H1 (cell line): ENCODE measurements at regions of chr7 and their contacts with region 1.

Region 1: DNA sequence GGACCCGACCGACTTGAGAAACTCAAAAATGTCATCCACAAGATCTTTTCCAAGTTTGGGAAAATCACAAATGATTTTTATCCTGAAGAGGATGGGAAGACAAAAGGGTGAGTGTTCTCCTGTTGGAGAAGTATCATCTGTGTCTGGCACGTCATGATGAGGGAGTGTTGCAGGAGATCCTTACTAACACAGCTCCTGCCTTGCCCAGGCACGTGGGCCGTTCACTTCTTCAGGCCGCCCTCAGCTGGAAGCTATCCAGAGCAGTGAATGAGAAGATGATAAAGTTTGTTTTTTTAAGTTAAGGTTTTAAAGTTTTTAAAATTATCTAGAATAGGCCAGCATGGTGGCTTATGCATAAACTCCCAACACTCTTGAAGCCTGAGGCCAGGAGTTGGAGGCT is 6.2 kb downstream of the EIF3B start:
- DNase-seq: no peak
- H3K4me3 ChIP-seq: no peak overlapping the region
- H3K27ac ChIP-seq: no peak overlapping the region
- H3K4me1 ChIP-seq: no peaks in the 10 kb centered on the region; a peak in 2 of 7 replicates
- H3K27me3 ChIP-seq: no peaks in the 10 kb centered on the region
- CTCF ChIP-seq: no peak
- EP300 ChIP-seq: no peak
- POLR2A ChIP-seq: no peak
- RAD21 ChIP-seq: no peak

Region 2: GRCh38 chr7:2373124-2373556 is 12.3 kb after region 1 on chr7:
- CTCF ChIA-PET with region 1: interaction called, 34 read pairs
- POLR2A ChIA-PET with region 1: interaction called, 69 read pairs
- DNase-seq: no peak
- H3K4me3 ChIP-seq: no peak overlapping the region
- H3K27ac ChIP-seq: no peak overlapping the region
- H3K4me1 ChIP-seq: no peaks in the 10 kb centered on the region
- H3K27me3 ChIP-seq: no peaks in the 10 kb centered on the region; a peak in 1 of 7 replicates
- CTCF ChIP-seq: peak in 1 of 3 experiments; percentile 6; a peak in 1 of 4 replicates
- EP300 ChIP-seq: no peak
- POLR2A ChIP-seq: peak in 1 of 2 experiments; percentile 8; a peak in 1 of 3 replicates
- RAD21 ChIP-seq: no peak

Region 3: DNA sequence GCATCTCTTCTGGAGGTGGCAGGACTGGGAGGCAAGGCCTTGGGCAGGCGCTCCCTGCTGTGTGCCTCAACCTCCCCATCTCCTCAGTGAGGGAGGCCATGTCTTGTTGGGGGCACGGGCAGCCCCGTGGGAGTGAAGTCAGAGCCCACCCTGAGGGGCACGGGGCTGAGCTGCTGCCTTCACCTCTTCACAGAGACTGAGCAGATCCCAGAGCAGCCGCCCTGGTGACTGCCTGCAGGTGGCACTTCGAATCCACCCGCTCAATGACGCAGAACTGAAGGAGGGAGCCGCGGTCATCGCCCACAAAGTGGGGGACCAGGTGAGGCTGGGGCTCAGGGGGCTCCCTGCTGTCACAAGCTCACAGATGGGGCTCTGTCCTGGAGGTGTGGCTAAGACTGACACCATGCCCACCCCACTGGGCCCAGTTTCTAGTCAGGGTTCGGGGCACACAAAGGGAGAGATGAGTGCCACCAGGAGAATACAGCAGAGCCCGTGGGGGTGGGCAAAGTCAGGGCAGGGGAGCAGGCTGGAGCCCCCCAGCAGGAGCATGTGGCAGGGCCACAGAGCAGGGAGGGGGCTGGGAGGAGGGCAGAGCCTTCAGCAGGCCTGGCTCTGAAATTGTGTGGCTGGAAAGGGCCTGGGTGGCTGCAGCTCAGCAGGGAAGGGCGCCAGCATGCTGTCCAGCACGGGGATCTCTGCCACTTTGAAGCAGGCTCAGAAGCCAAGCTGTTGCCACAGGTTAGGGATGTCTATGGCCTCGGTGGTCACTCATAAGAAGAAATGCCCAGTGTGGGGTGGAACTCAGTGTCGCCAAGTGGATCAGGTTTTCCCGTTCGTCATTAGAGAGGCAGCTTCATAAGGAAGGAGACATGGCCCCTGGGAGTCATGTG is 23.8 kb after region 1 on chr7:
- CTCF ChIA-PET with region 1: interaction called, 6 read pairs
- POLR2A ChIA-PET with region 1: interaction called, 14 read pairs
- DNase-seq: no peak
- H3K4me3 ChIP-seq: no peak overlapping the region
- H3K27ac ChIP-seq: no peak overlapping the region
- H3K4me1 ChIP-seq: peaks cover 0 to 5% (median 0%) of the 10 kb centered on the region in 4 experiments; a peak in 1 of 7 replicates
- H3K27me3 ChIP-seq: no peaks in the 10 kb centered on the region
- CTCF ChIP-seq: peak in 2 of 3 experiments; percentile 33; a peak in 2 of 4 replicates
- EP300 ChIP-seq: no peak
- POLR2A ChIP-seq: no peak
- RAD21 ChIP-seq: peak; percentile 46 to 64

Region 4: GRCh38 chr7:2597273-2597640 is 236.5 kb after region 1 on chr7:
- CTCF ChIA-PET with region 1: no interaction called
- POLR2A ChIA-PET with region 1: no interaction called
- DNase-seq: no peak
- H3K4me3 ChIP-seq: no peak overlapping the region
- H3K27ac ChIP-seq: no peak overlapping the region
- H3K4me1 ChIP-seq: peaks cover 0 to 3% (median 1%) of the 10 kb centered on the region in 4 experiments; a peak in 2 of 7 replicates
- H3K27me3 ChIP-seq: no peaks in the 10 kb centered on the region
- CTCF ChIP-seq: no peak
- EP300 ChIP-seq: no peak
- POLR2A ChIP-seq: no peak
- RAD21 ChIP-seq: no peak